A549 (cell line): ENCODE measurements at regions of chrX and their contacts with region 1.

Region 1: DNA sequence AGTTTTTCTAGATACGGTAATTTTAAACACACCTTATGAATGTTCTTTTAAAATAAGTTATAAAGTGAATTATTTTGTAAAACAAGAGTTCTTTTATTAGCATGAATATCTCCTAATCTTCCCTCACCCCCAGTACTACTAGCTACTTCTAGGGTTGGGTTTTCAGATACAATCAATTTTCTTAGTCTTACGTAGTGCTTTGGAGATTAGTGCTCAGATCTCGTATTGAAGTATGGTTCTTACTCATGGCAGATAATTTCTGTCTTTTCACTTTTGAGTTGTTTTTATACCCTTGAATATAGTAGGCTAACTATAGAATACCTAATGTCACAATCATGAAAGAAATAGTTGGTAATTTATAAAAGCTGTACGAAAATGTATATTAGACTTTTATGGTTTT is 43.2 kb downstream of the CDKL5 start:
- DNase-seq: no peak
- ATAC-seq: no peak
- H3K4me3 ChIP-seq: no peak overlapping the region
- H3K27ac ChIP-seq: no peak overlapping the region
- H3K4me1 ChIP-seq: peaks cover 20% of the 10 kb centered on the region
- CTCF ChIP-seq: no peak
- EP300 ChIP-seq: no peak
- POLR2A ChIP-seq: no peak
- RAD21 ChIP-seq: no peak

Region 2: DNA sequence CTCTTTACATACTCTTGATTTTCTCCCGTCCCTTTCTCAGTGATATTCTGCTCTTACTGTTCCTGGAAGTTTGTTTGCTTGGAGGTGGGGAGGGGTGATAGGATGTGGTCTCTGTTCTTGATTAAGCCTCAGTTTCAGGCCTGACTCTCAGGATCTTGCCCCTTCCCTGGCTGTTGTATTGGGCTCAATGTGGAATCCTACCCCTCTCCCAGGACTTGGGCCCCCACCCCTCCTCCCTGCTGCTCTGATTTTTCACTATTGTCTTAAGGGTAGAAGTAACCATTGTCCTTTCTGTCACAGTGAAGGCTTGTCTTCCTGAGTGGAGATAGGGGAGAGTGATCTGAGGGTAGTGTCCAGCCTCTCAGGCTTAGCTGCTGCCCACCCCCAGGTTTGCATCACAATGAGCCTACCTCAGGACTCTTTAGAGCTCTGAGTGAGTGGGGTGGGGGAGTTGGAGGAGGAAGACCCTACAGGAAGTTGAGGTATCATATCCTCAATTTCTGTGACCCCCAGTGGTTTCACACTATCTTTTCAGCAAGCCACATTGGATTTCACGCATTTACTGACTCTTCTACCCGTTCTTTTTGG is 26.7 kb before region 1 on chrX:
- CTCF ChIA-PET with region 1: no interaction called
- POLR2A ChIA-PET with region 1: interaction called, 15 read pairs
- DNase-seq: no peak
- ATAC-seq: peak in 1 of 2 experiments; percentile 28; a peak in 1 of 6 replicates
- H3K4me3 ChIP-seq: no peak overlapping the region
- H3K27ac ChIP-seq: no peak overlapping the region
- H3K4me1 ChIP-seq: no peaks in the 10 kb centered on the region
- CTCF ChIP-seq: no peak
- EP300 ChIP-seq: no peak
- POLR2A ChIP-seq: no peak
- RAD21 ChIP-seq: no peak